A549 (cell line): ENCODE measurements at regions of chr2 and their contacts with region 1.

Region 1: DNA sequence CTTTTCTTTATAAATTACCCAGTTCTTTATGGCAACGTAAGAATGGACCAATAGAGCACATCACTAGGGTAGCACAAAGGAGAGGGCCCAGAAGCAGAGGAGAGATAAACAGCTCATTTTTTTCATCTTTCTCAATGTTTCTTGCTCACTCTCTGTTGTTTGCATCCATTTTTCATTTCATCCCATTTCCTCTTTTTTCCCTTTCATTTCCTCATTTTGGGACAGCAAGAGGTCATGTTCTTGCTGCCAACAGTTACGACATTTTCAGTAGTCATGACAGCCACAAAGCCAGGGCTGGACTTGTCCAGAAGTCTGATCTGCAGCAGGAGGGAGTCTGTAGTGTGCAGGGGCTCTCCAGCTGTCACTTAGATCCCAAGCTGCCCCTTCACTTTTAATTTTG is 52.7 kb upstream of the CYP1B1 start:
- DNase-seq: no peak
- ATAC-seq: no peak
- H3K4me3 ChIP-seq: no peak overlapping the region
- H3K27ac ChIP-seq: no peak overlapping the region
- H3K4me1 ChIP-seq: no peaks in the 10 kb centered on the region
- CTCF ChIP-seq: no peak
- EP300 ChIP-seq: no peak
- POLR2A ChIP-seq: no peak
- RAD21 ChIP-seq: no peak

Region 2: GRCh38 chr2:38115216-38116032 is 13.2 kb before region 1 on chr2:
- CTCF ChIA-PET with region 1: interaction called, 10 read pairs
- POLR2A ChIA-PET with region 1: no interaction called
- DNase-seq: peak; percentile 82 to 88
- ATAC-seq: peak; percentile 92 to 98
- H3K4me3 ChIP-seq: no peak overlapping the region
- H3K27ac ChIP-seq: no peak overlapping the region
- H3K4me1 ChIP-seq: peaks cover 10% of the 10 kb centered on the region
- CTCF ChIP-seq: peak; percentile 98
- EP300 ChIP-seq: no peak
- POLR2A ChIP-seq: no peak
- RAD21 ChIP-seq: peak; percentile 89 to 97